HEK293 (cell line): ENCODE measurements at regions of chr19 and their contacts with region 1.

Region 1: DNA sequence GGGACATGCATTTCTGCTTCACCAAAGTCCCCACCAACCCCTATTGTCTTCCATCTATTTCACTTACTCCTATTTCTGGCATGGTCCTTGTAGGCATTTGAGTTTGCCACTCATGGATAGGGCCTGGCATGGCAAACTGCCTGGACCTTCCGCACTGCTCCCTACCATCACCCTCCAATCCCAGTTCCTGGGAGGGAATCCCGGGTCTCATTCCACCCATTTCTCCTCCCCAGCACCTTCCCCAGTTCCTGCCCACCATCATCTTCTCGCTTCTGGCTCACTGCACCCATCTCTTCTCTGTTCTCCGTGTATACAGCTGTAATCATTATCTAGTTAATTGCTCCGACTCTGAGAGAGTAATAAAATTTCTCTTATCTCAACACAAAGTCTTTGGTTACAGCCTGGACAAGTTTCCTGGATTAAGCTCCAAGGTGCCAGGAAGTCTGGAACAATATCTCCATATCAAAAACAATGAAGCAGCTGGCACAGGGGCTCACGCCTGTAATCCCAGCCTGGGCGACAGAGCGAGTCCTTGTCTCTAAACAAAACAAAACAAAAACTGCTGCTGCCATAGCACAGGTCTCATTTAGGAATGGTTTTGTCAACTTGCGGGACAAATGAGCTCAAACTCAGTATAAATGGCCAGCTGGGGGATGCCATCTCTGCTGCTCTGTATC is 17.0 kb upstream of the COX7A1 start:
- H3K4me3 ChIP-seq: no peak overlapping the region
- H3K27ac ChIP-seq: peak overlapping the region; percentile 92
- H3K4me1 ChIP-seq: peaks cover 28% of the 10 kb centered on the region
- CTCF ChIP-seq: no peak

Region 2: GRCh38 chr19:35921012-35921411 is 248.2 kb before region 1 on chr19:
- CTCF ChIA-PET with region 1: no interaction called
- POLR2A ChIA-PET with region 1: no interaction called
- H3K4me3 ChIP-seq: no peak overlapping the region
- H3K27ac ChIP-seq: no peak overlapping the region
- H3K4me1 ChIP-seq: no peaks in the 10 kb centered on the region
- CTCF ChIP-seq: no peak

Region 3: GRCh38 chr19:36041831-36042230 is 127.4 kb before region 1 on chr19:
- CTCF ChIA-PET with region 1: no interaction called
- POLR2A ChIA-PET with region 1: no interaction called
- H3K4me3 ChIP-seq: no peak overlapping the region
- H3K27ac ChIP-seq: no peak overlapping the region
- H3K4me1 ChIP-seq: peaks cover 2% of the 10 kb centered on the region; the same call in 1 of the 2 replicates
- CTCF ChIP-seq: no peak

Region 4: DNA sequence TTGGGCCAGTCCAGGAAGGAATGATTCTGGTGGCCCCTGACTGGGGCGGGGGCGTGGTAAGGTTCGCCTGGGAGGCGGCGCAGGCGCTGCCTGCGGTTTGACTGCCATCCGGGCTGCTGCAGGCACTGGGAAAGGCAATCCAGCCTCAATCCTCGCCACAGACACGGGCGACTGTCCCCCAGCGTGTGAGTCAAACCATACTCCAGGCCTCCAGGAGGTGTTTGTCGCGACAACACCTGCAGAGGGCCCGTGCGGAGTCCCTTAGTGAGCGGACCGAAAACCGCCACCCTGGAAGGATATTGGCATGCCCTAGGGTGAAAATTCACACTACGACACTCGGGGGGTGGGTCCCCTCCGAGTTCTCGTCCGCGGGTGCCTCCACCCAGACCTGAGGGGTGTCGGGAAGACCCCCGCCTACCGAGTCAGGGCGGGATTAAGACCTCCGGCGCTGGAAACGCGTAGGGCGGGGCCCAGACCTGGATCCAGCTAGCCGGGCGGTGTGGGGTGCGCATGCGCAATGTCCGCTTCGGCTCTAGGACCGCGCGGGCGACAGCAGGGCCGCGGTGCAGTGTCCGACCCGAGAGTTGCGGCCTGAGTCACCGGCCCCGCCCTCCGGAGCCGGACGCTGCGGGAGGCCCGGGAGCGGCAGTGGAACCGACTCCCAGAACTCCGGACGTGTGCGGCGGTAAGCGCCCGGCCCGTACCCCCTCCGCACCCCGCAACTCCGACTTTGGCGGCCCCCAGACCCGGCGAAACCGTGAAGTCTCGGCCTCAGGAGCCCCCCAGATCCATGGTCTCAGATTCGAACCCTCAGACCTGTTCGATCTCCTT is 29.5 kb before region 1 on chr19 and contains the start of gene CAPNS1:
- CTCF ChIA-PET with region 1: interaction called, 6 read pairs
- POLR2A ChIA-PET with region 1: interaction called, 17 read pairs
- H3K4me3 ChIP-seq: peak within 1 kb of the TSS; percentile 80
- H3K27ac ChIP-seq: peak within 1 kb of the TSS; percentile 94
- H3K4me1 ChIP-seq: peaks cover 14% of the 10 kb centered on the region
- CTCF ChIP-seq: peak; percentile 94

Region 5: DNA sequence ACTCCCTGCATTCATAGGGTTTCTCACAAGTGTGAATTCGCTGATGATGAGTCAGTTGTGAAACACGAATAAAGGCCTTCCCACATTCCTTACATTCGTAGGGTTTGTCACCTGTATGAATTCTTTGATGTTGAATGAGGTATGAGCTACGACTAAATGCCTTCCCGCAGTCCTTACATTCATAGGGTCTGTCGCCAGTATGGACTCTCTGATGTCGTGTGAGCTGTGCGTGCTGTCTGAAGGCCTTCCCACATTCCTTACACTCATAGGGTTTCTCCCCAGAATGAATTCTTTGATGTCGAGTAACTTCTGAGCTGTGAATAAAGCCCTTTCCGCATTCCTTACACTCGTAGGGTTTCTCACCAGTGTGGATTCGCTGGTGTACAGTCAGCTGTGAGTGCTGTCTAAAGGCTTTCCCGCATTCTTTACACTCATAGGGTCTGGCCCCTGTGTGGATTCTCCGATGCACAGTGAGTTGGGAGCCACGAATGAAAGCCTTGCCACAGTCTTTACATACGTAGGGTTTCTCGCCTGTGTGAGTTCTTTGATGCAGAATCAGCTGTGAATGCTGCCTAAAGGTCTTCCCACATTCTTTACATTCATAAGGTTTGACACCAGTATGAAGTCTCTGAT is 13.5 kb after region 1 on chr19:
- CTCF ChIA-PET with region 1: interaction called, 11 read pairs
- POLR2A ChIA-PET with region 1: no interaction called
- H3K4me3 ChIP-seq: no peak overlapping the region
- H3K27ac ChIP-seq: no peak overlapping the region
- H3K4me1 ChIP-seq: no peaks in the 10 kb centered on the region
- CTCF ChIP-seq: no peak